ENCODE measurements at regions of chr18 and their contacts with region 1.

Region 1: GRCh38 chr18:26322890-26323653 is 96.8 kb downstream of the TAF4B start:
- DNase-seq: no peak
- ATAC-seq: no peak
- H3K4me3 ChIP-seq: no peak overlapping the region
- H3K27ac ChIP-seq: no peak overlapping the region
- H3K4me1 ChIP-seq: no peaks in the 10 kb centered on the region
- H3K27me3 ChIP-seq: no peaks in the 10 kb centered on the region
- CTCF ChIP-seq: no peak
- EP300 ChIP-seq: no peak
- POLR2A ChIP-seq: no peak
- RAD21 ChIP-seq: no peak

Region 2: GRCh38 chr18:26233225-26233624 is 89.8 kb before region 1 on chr18:
- CTCF ChIA-PET with region 1: no interaction called
- POLR2A ChIA-PET with region 1: no interaction called
- RAD21 ChIA-PET with region 1: no interaction called
- SMC1A ChIA-PET with region 1: no interaction called
- in situ Hi-C with region 1: no loop called
- intact Hi-C with region 1: no loop called
- DNase-seq: no peak
- ATAC-seq: no peak
- H3K4me3 ChIP-seq: no peak overlapping the region
- H3K27ac ChIP-seq: no peak overlapping the region
- H3K4me1 ChIP-seq: no peaks in the 10 kb centered on the region
- H3K27me3 ChIP-seq: no peaks in the 10 kb centered on the region
- CTCF ChIP-seq: no peak
- EP300 ChIP-seq: no peak
- POLR2A ChIP-seq: no peak
- RAD21 ChIP-seq: no peak

Region 3: DNA sequence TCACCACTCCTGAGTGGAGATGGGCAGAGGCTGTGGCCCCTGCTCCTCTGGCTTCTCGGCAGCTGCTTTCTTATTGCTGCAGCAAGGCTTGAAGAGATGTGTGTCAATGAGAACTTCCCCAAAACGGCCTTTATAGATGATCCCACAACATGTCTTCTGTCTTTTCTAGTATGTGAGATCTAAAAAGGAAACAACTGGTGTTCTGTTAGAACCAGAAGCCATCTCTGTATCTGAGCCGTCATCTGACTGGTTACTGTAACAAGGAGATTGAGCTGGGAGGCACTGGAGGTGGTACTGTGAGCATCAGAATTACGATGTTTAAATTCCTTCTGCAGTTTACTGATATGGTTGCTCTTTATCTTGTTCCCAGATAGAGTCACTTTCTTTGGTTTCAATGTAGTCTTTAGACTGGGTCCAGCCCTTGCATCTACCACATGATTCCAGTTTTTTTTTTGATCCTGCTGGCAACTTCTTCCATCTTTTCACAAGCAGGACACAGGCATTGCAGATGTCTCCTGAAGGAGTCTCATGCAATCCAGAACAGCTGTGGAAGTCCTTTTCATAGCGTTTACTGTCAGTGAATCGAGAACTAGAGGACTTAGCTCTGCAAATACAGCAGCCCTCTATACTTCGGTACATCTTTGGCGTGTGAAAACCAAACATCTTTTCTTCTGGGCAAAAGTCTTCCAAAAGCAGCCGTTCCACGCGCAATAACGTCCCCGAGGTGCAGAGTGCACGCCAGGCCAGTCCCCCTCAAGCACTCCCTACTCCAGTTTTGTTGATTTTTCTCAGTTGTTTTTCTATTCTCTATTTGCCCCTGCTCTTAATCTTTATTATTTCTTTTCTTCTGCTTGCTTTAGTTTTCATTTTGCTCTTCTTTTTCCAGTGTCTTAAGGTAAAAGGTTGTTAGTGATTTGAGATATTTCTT is 67.1 kb before region 1 on chr18:
- CTCF ChIA-PET with region 1: no interaction called
- POLR2A ChIA-PET with region 1: no interaction called
- RAD21 ChIA-PET with region 1: no interaction called
- SMC1A ChIA-PET with region 1: no interaction called
- in situ Hi-C with region 1: no loop called
- intact Hi-C with region 1: no loop called
- DNase-seq: no peak
- ATAC-seq: peak; percentile 72
- H3K4me3 ChIP-seq: peak overlapping the region; percentile 22; the same call in 1 of the 2 replicates
- H3K27ac ChIP-seq: no peak overlapping the region
- H3K4me1 ChIP-seq: 0 out of 2 replicates have a peak, but pooled peaks cover 4% of the 10 kb centered on the region
- H3K27me3 ChIP-seq: no peaks in the 10 kb centered on the region
- CTCF ChIP-seq: no peak
- EP300 ChIP-seq: no peak
- POLR2A ChIP-seq: no peak
- RAD21 ChIP-seq: no peak

Region 4: DNA sequence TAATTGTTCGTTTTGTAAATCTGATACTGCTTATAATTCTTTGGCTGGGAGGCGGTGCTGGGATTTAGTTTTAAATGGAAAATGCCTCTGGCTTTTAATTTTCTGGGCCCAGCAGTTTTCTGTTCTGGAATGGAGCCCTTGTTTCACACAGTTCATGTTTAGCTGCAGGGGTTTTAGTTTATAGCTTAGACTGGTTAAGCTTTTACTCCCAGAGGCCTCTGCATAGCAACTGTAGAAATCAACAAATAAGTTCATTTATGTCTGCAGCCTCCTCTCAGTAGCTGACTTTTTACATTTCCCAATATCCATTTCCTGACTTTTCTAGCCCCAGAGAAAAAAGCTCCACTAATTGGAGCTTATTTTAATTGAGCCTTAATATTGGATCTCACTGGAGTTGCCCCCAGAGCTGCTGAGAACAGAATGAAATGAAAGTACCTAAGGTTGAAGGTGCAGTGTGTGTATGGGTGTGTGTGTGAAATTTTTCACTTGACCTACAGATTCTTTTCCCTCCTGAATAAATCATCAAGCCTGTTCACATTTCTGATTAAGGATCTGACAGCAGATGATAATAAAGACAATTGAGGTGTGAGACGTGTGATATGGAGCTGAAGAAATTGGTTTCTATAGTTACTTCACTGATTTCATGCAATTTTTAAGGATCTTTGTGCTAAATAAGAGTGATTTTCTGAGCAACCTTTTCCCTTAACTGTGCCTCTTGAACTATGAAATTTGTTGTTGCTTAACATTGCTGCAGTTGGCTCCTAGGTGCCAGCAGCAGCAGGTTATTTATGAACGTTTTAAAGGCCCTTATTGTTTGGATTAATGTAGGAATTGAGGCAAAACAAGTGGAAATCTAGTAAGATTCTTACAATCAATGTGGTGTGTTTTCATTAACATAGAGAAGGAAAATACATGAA is 12.8 kb after region 1 on chr18:
- CTCF ChIA-PET with region 1: interaction called, 6 read pairs
- POLR2A ChIA-PET with region 1: interaction called, 3 read pairs
- RAD21 ChIA-PET with region 1: no interaction called
- SMC1A ChIA-PET with region 1: interaction called, 31 read pairs
- in situ Hi-C with region 1: no loop called
- intact Hi-C with region 1: no loop called
- DNase-seq: no peak
- ATAC-seq: no peak
- H3K4me3 ChIP-seq: no peak overlapping the region
- H3K27ac ChIP-seq: no peak overlapping the region
- H3K4me1 ChIP-seq: no peaks in the 10 kb centered on the region
- H3K27me3 ChIP-seq: no peaks in the 10 kb centered on the region
- CTCF ChIP-seq: no peak
- EP300 ChIP-seq: no peak
- POLR2A ChIP-seq: no peak
- RAD21 ChIP-seq: no peak